ENCODE measurements at regions of chr4 and their contacts with region 1.

Region 1: GRCh38 chr4:139015269-139015947 is at the start of gene NOCT:
- DNase-seq: peak; percentile 85 to 94 (median 90)
- ATAC-seq: peak; percentile 91 to 93
- H3K4me3 Mint-ChIP-seq: peak within 1 kb of the TSS; percentile 78 to 95 (median 89)
- H3K27ac Mint-ChIP-seq: peak within 1 kb of the TSS; percentile 92 to 100 (median 98)
- H3K4me1 Mint-ChIP-seq: peaks cover 15 to 31% (median 26%) of the 10 kb centered on the region in 4 donors
- H3K27me3 Mint-ChIP-seq: peaks cover 0 to 2% (median 0%) of the 10 kb centered on the region in 5 donors
- polyA plus RNA-seq, gene NOCT: 0.44 to 0.51 TPM in 2 of 3 donors, not detected in the other

Region 2: DNA sequence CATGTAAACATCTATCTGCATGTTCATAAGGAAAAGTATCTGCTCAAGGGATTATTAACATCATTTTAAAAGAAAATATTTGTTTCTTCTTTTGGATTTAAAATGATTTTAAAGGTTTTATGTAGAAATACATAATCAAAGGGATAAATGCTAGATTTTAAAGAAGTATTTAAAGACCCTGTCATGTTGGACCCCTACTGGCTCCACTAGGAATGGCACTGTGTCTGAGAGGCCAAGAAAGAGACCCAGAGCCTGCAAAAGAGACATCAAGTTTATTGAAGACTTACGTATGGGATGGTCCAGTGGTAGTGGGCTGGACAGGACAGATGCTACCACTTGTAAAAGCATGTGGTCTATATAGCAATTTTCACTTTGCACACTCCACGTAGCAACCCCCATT is 1404.4 kb before region 1 on chr4:
- POLR2A ChIA-PET with region 1: no interaction called
- DNase-seq: no peak
- ATAC-seq: no peak
- H3K4me3 Mint-ChIP-seq: no peak overlapping the region
- H3K27ac Mint-ChIP-seq: no peak overlapping the region
- H3K4me1 Mint-ChIP-seq: no peaks in the 10 kb centered on the region
- H3K27me3 Mint-ChIP-seq: no peaks in the 10 kb centered on the region

Region 3: DNA sequence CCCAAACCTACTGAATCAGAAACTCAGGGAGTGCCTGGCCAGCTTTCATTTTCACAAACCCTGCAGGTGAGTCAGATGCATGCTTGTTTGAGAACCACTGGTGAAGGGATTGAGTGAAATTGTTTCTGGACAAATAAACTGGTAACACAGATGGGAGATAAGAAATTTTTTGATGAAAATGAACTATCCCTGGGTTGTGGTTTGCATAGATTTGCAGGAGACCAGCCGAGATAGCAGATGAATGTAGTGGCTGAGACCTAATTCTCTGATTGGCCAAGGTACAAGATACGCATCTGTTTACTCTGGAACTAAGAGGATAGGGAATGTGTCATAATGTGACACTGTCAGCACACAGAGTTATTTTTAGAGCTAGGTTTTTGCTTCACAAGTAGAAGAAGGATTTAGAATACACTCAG is 117.6 kb before region 1 on chr4:
- POLR2A ChIA-PET with region 1: no interaction called
- DNase-seq: no peak
- ATAC-seq: no peak
- H3K4me3 Mint-ChIP-seq: no peak overlapping the region
- H3K27ac Mint-ChIP-seq: no peak overlapping the region
- H3K4me1 Mint-ChIP-seq: no peaks in the 10 kb centered on the region
- H3K27me3 Mint-ChIP-seq: peaks cover 0 to 6% (median 3%) of the 10 kb centered on the region in 5 donors

Region 4: DNA sequence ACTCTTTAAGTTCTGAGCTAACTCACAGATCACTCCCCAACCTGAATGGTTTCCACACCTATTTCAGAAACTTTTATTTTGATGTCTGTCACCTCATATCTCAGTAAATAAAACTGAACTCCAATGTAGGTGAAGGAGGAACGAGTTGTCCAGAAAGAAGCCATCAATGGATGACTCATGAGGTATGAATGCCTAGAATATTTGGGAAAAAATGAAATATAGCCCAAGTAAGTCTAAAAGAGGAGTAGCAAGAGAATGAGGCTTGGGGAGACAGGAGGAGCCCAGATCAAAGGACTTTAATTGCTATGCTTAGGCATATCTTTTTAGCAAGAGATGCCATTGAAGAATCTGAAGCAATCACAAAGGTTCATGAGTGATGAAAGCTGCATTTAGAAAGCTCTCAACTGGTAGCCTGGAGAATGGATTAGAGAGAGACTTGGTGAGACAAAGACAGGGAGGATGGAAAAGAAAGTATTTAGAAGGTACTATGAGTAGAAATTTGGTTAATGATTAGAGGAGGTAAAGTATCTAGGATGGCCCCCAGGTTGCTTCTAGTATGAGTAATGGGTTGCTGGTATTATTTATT is 39.5 kb after region 1 on chr4:
- POLR2A ChIA-PET with region 1: interaction called, 12 read pairs
- DNase-seq: no peak
- ATAC-seq: no peak
- H3K4me3 Mint-ChIP-seq: no peak overlapping the region
- H3K27ac Mint-ChIP-seq: peak overlapping the region; percentile 26 to 84 (median 68)
- H3K4me1 Mint-ChIP-seq: peaks cover 26 to 42% (median 36%) of the 10 kb centered on the region in 4 donors
- H3K27me3 Mint-ChIP-seq: no peaks in the 10 kb centered on the region

Region 5: DNA sequence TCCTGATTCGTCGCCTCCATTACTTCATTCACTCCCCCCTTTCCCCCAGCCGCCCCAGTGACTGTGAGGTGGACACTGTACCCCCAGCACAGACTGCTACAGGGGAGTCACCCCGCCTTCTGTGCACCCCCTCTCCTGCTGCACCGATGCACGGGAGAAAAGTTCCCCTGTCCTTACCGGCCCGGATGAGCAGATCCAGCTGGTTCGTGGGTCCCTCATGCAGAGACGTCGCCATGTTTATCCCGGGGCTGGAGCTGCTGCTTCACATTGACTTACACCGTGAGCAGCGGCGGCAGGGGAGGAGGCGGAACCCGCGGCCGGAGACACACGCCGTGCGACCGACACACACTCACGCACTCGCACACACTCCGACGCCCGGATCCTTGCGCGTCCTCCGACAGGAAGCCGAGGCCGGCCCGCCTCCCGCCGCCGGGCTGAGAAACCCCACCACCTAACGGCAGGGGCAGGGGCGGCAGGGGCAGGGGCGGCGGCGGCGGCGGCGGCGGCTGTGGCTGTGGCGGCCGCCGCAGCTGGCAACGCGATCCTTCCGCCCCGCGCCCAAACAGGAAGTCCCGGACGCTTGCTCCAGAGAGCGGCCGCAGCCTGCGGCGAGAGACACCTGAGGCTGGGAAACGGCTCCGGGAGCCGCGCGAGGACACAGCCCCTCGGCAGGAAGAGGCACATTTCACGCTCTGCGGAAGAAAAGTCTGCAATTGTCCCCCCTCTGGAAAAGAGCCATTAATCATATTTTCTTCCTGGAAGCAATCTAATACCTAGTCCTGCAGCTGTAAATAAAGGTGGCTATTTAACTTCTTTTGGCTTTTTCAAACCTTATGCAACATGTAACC is 68.8 kb after region 1 on chr4:
- POLR2A ChIA-PET with region 1: interaction called, 33 read pairs
- DNase-seq: peak; percentile 67 to 91 (median 79)
- ATAC-seq: peak; percentile 50 to 57
- H3K4me3 Mint-ChIP-seq: peak overlapping the region; percentile 81 to 100 (median 98)
- H3K27ac Mint-ChIP-seq: peak overlapping the region; percentile 95 to 100 (median 97)
- H3K4me1 Mint-ChIP-seq: peaks cover 11 to 50% (median 33%) of the 10 kb centered on the region in 4 donors
- H3K27me3 Mint-ChIP-seq: no peaks in the 10 kb centered on the region